HEK293 (cell line): ENCODE measurements at regions of chr2 and their contacts with region 1.

Region 1: GRCh38 chr2:159118115-159118858 is 149.8 kb downstream of the TANC1 start:
- H3K4me3 ChIP-seq: no peak overlapping the region
- H3K27ac ChIP-seq: no peak overlapping the region
- H3K4me1 ChIP-seq: peaks cover 6% of the 10 kb centered on the region
- CTCF ChIP-seq: peak; percentile 80

Region 2: DNA sequence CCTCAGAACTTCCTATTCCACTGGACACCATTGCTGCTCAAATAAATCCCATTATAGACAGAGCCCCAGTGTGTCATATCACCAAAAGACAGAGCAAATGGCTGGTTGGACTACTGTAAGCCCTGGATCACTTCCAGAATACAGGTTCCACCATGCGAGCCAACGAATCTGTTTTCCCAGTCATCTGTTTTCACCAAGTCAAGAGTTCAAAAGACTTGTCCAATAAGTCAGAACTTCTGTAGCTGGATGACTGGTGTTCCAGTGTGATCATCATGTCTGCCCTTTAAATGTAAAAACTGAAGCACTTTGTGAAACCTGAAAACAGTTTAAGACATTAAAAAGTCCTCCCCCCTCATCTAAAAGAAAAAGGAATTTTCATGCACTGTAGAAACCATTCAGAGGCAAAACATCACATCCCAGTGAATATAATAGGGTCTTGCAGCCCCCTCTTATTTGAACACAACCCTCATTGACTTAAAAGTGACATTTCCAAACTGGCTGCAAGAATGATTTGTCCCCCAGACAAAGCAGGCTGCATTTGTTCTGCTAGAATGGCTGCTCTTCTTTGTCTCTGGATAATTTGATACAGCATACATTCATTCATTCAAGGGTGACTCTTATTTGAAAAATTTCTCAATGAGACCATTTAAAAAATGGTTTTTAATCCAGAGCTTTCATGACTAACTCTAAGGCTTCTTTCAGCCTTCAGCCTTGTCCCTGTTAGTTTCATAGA is 214.4 kb before region 1 on chr2:
- CTCF ChIA-PET with region 1: interaction called, 27 read pairs
- POLR2A ChIA-PET with region 1: no interaction called
- H3K4me3 ChIP-seq: no peak overlapping the region
- H3K27ac ChIP-seq: no peak overlapping the region
- H3K4me1 ChIP-seq: no peaks in the 10 kb centered on the region
- CTCF ChIP-seq: no peak

Region 3: GRCh38 chr2:159035790-159036411 is 82.4 kb before region 1 on chr2:
- CTCF ChIA-PET with region 1: interaction called, 78 read pairs
- POLR2A ChIA-PET with region 1: no interaction called
- H3K4me3 ChIP-seq: no peak overlapping the region
- H3K27ac ChIP-seq: no peak overlapping the region
- H3K4me1 ChIP-seq: peaks cover 4% of the 10 kb centered on the region; the same call in 1 of the 2 replicates
- CTCF ChIP-seq: no peak; the same call in 1 of the 2 replicates

Region 4: DNA sequence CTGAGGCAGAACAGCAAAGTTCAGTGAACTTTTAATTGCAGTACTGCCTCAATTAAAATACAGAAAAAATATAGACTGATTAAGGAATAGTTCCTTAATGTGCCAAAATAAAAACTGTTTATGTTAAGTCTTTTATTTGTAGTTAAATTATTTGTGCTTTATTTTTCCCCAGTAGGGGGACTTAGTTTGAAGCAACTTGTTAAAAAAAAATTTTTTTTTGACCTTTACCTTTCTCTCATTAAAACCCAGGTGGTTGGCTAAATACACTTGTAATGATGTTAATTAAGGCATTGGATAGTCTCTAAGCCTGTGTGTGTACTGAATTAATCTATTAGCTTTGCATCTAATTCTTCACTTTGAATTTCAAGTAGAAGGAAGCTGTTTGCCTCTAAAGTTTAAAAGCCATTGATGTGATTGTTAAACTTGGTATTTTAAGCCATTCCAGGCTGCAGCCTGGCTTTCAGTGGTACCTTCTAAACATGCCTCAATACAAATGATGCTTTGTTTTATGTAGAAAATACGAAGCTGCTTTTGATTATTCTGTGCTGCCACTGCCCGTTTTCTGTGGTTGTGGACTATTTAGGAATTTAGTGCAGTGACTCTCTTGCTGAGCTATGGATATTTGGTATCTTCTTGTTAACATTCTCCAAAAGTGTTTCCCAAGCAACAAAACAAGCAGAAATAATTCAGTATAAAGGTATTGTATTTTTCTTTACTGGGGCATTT is 46.9 kb before region 1 on chr2:
- CTCF ChIA-PET with region 1: interaction called, 11 read pairs
- POLR2A ChIA-PET with region 1: no interaction called
- H3K4me3 ChIP-seq: no peak overlapping the region
- H3K27ac ChIP-seq: no peak overlapping the region
- H3K4me1 ChIP-seq: no peaks in the 10 kb centered on the region
- CTCF ChIP-seq: no peak

Region 5: DNA sequence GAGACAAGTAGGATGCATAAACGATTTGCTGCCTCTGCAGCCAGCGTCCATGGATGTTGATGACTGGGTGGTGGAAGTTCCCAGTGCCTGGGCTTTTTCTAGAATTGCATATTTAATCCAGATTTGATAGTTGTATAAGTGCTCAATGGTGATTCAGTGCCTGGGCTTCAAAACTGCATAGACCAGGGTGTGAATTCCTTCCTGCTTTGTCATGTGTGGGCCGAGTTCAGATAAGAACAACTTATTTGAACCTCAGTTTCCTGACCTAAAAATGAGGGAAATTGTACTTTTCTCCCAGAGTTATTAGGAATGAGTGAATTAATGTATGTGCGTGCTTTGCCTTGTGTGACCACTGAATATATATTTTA is 13.6 kb after region 1 on chr2:
- CTCF ChIA-PET with region 1: interaction called, 18 read pairs
- POLR2A ChIA-PET with region 1: no interaction called
- H3K4me3 ChIP-seq: no peak overlapping the region
- H3K27ac ChIP-seq: no peak overlapping the region
- H3K4me1 ChIP-seq: peaks cover 28% of the 10 kb centered on the region
- CTCF ChIP-seq: no peak